Posterior vena cava (tissue), 2 donors: ENCODE measurements at regions of chr2 and their contacts with region 1.

Region 1: DNA sequence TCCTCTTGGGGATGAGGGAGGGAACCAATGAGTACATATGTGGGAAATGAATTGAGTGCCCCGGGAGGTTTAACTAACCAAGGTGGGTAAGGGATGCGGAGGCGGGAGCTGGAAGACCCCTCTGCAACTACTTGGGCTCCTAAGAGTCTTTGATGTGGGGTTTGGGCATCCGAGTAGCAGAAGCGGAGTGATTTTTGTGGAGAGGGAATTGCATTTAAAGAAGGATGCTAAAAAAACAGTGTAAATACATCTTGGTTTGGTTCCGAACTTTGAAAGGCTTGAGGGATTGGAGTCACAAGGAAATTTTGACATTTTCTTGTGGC is 215.7 kb downstream of the MCFD2 start:
- DNase-seq: no peak

Region 2: DNA sequence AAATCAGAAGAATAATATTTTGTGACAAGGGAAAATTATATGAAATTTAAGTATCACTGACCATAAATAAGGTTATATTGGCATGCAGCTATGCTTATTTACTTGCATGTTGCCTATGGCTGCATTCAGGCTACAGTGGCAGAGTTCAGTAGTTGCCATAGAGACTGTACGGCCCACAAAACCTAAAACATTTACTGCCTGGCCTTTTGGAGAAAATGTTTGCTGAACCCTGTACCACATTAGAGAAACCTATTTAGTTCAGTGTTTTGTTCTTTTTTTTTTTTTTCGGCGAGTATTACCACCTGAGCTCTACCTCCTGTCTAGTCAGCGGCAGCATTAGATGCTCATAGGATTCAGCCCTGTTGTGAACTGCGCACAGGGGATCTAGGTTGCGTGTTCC is 52.0 kb after region 1 on chr2:
- intact Hi-C with region 1: loop called in 1 of 2 experiments (anchors 10 kb)
- DNase-seq: no peak

Region 3: GRCh38 chr2:46780801-46781445 is 81.0 kb after region 1 on chr2:
- intact Hi-C with region 1: loop called in 1 of 2 experiments (anchors 10 kb)
- DNase-seq: no peak

Region 4: DNA sequence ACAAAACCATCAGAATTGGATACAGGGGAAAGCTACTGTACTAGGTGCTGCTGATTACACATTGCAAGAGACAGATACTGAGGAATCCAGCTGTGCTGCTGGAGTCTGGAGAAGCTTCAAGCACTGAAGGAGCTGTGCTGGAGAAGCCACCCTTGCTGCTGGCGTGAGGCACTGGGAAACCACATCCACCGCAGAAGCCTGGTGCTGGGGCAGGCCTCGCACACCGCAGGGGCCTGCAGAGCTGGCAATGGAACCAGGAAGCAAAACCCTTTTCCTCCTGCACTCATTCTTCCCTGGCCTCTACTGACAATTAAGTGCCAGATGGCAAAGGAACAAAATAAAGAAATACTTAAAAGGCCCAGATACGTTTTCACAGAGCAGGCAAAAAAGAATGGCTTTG is 988.7 kb after region 1 on chr2:
- intact Hi-C with region 1: no loop called
- DNase-seq: no peak